ENCODE measurements at regions of chr9 and their contacts with region 1.

Region 1: GRCh38 chr9:132268725-132269352 is 85.9 kb downstream of the SETX start:
- DNase-seq: peak; percentile 50 to 79 (median 71)
- ATAC-seq: peak; percentile 78
- H3K4me3 ChIP-seq: no peak overlapping the region
- H3K4me3 Mint-ChIP-seq: no peak overlapping the region
- H3K27ac ChIP-seq: no peak overlapping the region
- H3K27ac Mint-ChIP-seq: peak overlapping the region; percentile 38
- H3K4me1 ChIP-seq: no peaks in the 10 kb centered on the region
- H3K4me1 Mint-ChIP-seq: peaks cover 3% of the 10 kb centered on the region
- H3K27me3 ChIP-seq: no peaks in the 10 kb centered on the region
- H3K27me3 Mint-ChIP-seq: no peaks in the 10 kb centered on the region
- CTCF ChIP-seq: peak; percentile 95

Region 2: GRCh38 chr9:131762356-131762932 is 506.4 kb before region 1 on chr9:
- CTCF ChIA-PET with region 1: interaction called, 11 read pairs
- POLR2A ChIA-PET with region 1: no interaction called
- intact Hi-C with region 1: loop called (anchors 1 kb)
- DNase-seq: peak; percentile 57 to 87 (median 75)
- ATAC-seq: peak; percentile 94
- H3K4me3 ChIP-seq: no peak overlapping the region
- H3K4me3 Mint-ChIP-seq: no peak overlapping the region
- H3K27ac ChIP-seq: no peak overlapping the region
- H3K27ac Mint-ChIP-seq: no peak overlapping the region
- H3K4me1 ChIP-seq: peaks cover 5% of the 10 kb centered on the region
- H3K4me1 Mint-ChIP-seq: peaks cover 1% of the 10 kb centered on the region
- H3K27me3 ChIP-seq: no peaks in the 10 kb centered on the region
- H3K27me3 Mint-ChIP-seq: peaks cover 6% of the 10 kb centered on the region
- CTCF ChIP-seq: peak; percentile 99

Region 3: DNA sequence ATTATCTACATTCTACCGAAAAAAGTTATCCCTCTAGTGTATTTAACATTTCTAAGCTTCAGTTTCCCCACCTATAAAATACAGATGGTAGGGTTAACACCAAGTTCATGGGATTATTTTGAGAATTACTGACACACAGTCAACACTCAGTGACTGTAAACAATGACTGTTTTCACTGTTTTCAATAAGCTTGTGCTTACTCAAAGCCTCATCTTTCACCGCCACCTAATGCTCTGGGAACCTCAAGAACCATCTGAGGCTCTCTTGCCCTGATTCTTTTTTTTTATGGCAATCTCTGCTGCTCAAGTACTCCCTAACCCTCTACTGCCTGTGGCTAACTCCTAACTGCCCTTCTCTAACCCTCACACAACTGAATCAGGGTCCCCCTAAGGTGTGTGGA is 26.3 kb after region 1 on chr9:
- CTCF ChIA-PET with region 1: interaction called, 10 read pairs
- POLR2A ChIA-PET with region 1: no interaction called
- intact Hi-C with region 1: no loop called
- DNase-seq: no peak
- ATAC-seq: no peak
- H3K4me3 ChIP-seq: no peak overlapping the region
- H3K4me3 Mint-ChIP-seq: no peak overlapping the region
- H3K27ac ChIP-seq: peak overlapping the region in 1 of 2 experiments; percentile 16
- H3K27ac Mint-ChIP-seq: peak overlapping the region; percentile 38
- H3K4me1 ChIP-seq: no peaks in the 10 kb centered on the region
- H3K4me1 Mint-ChIP-seq: peaks cover 30% of the 10 kb centered on the region
- H3K27me3 ChIP-seq: no peaks in the 10 kb centered on the region
- H3K27me3 Mint-ChIP-seq: no peaks in the 10 kb centered on the region
- CTCF ChIP-seq: no peak

Measured in CD8-positive, alpha-beta T cell (primary cell).